Mammary epithelial cell (primary cell): ENCODE measurements at regions of chr15 and their contacts with region 1.

Region 1: GRCh38 chr15:88730751-88731150 is 72.5 kb upstream of the ACAN start:
- DNase-seq: no peak
- H3K4me3 ChIP-seq: no peak overlapping the region
- H3K27ac ChIP-seq: no peak overlapping the region
- H3K4me1 ChIP-seq: no peaks in the 10 kb centered on the region
- H3K27me3 ChIP-seq: no peaks in the 10 kb centered on the region
- CTCF ChIP-seq: no peak

Region 2: DNA sequence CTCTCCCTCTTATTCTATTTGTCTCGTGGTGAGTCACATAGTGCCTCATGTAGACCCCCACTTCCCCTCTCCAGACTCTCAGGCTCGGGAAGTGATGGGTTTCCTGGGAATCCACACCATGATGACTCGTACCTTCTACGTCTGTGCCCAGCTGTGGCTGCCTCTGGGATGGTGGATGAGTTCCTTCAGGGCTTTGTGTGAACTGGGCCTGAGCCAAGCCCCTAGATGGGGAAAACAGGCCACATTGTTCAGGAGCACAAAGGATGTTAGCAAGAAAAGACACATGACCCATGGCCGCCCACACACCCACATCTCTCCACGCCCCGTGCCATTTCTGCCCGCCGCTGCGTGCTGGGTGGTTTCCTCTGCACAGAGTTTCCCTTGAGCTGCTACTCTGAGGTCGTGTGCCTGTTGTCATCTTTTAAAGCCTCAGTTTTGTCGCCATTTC is 81.4 kb before region 1 on chr15:
- CTCF ChIA-PET with region 1: no interaction called
- dilution Hi-C with region 1: no loop called
- in situ Hi-C with region 1: no loop called
- intact Hi-C with region 1: no loop called
- DNase-seq: peak; percentile 94
- H3K4me3 ChIP-seq: no peak overlapping the region
- H3K27ac ChIP-seq: peak overlapping the region; percentile 75
- H3K4me1 ChIP-seq: peaks cover 43% of the 10 kb centered on the region
- H3K27me3 ChIP-seq: no peaks in the 10 kb centered on the region
- CTCF ChIP-seq: no peak

Region 3: DNA sequence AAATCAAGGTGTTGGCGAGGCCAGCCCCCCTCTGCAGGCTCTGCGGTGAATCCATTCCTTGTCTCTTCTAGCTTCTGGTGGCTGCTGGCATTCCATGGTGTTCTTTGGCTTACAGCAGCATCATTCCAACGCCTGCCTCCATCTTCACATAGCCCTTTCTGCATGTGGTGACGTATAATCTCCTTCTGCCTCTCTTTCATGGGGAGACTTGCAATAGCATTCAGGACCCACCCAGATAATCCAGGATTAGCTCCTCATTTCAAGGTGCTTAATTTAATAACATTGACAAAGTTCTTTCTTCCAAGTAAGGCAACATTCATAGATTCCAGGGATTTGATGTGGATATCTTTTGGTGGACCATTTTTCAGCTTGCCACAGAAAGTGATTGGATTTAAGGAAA is 56.1 kb before region 1 on chr15:
- CTCF ChIA-PET with region 1: no interaction called
- dilution Hi-C with region 1: loop called (anchors 5 kb)
- in situ Hi-C with region 1: no loop called
- intact Hi-C with region 1: no loop called
- DNase-seq: no peak
- H3K4me3 ChIP-seq: no peak overlapping the region
- H3K27ac ChIP-seq: no peak overlapping the region
- H3K4me1 ChIP-seq: no peaks in the 10 kb centered on the region
- H3K27me3 ChIP-seq: no peaks in the 10 kb centered on the region
- CTCF ChIP-seq: no peak